Kidney (tissue), 22 donors: ENCODE measurements at regions of chr15 and their contacts with region 1.

Region 1: DNA sequence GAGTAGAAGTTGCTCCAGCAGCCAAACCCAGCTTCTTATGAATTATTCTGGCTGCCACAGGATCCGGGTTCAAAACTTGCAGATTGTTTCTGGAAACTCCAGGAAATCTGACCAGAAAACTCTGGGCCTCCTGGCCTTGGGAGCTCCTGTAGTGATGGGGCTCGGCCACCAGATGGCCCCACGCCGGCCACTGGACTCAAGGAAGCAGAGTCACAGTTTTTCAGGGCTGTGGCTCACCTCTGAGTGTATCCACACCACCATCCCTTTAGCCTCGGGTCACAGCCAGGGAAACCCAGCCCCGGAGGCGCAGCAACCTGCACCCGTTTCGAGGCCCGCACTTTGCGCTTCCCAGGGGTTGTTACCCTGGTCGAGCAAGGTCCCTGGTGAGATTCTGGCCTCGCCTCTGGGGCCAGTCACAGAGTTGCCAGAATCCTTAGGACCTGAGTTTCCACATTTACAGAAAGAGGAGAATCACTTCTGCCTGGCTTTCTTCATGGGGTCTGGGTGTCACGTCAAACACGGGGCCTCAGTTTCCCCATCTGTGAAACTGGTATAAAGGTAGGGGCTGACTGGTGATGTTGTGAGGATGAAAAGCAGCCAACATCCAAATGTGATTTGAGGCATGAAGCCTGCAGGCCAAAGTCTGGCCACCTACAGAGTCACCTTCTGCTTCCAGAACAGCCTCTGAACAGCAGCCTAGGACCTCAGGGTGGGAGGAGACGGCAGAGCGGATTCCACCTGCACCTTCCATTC is 53.5 kb upstream of the LCTL start:
- DNase-seq: peak; percentile 78 to 92 (median 85)
- H3K4me3 ChIP-seq: no peak overlapping the region
- H3K27ac ChIP-seq: peak overlapping the region in 1 of 2 donors; percentile 57
- H3K4me1 ChIP-seq: peaks cover 0 to 13% (median 8%) of the 10 kb centered on the region in 3 donors
- H3K27me3 ChIP-seq: no peaks in the 10 kb centered on the region
- CTCF ChIP-seq: peak; percentile 91

Region 2: DNA sequence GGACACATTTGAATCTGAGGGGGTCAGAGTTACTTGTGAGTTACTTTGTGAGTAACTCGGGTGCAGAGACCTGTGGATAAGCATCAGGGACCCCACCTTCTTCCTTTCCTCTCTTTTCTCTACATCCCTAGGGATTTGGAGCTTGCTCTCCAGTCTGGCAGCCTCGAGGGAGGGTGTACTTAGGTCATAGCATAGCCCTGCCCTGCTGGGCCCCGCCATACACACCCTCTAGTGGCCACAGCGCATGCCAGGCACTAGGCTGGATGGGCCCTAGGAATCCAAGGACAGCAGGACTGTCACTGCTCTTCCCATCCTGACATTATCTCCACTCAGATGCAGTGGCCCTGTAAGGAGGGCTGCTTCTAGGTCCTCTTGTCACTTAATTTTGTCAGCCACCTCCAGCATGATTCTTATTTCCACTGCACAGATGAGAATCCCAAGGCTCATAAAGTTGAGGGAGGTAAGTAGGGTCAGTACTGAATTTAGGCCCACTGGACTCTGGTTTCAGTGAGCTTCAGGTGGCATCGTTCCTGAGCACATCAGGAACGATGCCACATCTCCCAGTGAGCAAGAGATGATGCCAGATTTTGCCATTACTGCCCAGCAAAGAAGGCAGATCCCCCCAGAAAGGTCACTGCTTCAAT is 79.1 kb after region 1 on chr15:
- intact Hi-C with region 1: loop called (anchors 10 kb)
- DNase-seq: peak; percentile 75 to 84 (median 81)
- H3K4me3 ChIP-seq: no peak overlapping the region
- H3K27ac ChIP-seq: no peak overlapping the region
- H3K4me1 ChIP-seq: peaks cover 0 to 3% (median 3%) of the 10 kb centered on the region in 3 donors
- H3K27me3 ChIP-seq: no peaks in the 10 kb centered on the region
- CTCF ChIP-seq: peak; percentile 89

Region 3: GRCh38 chr15:66851226-66852071 is 232.1 kb after region 1 on chr15:
- intact Hi-C with region 1: loop called (anchors 10 kb)
- DNase-seq: peak; percentile 89 to 96 (median 92)
- H3K4me3 ChIP-seq: no peak overlapping the region
- H3K27ac ChIP-seq: peak overlapping the region in 1 of 2 donors; percentile 43
- H3K4me1 ChIP-seq: peaks cover 0 to 10% (median 6%) of the 10 kb centered on the region in 3 donors
- H3K27me3 ChIP-seq: no peaks in the 10 kb centered on the region
- CTCF ChIP-seq: peak; percentile 94